Endothelial cell of umbilical vein (primary cell): ENCODE measurements at regions of chr3 and their contacts with region 1.

Region 1: DNA sequence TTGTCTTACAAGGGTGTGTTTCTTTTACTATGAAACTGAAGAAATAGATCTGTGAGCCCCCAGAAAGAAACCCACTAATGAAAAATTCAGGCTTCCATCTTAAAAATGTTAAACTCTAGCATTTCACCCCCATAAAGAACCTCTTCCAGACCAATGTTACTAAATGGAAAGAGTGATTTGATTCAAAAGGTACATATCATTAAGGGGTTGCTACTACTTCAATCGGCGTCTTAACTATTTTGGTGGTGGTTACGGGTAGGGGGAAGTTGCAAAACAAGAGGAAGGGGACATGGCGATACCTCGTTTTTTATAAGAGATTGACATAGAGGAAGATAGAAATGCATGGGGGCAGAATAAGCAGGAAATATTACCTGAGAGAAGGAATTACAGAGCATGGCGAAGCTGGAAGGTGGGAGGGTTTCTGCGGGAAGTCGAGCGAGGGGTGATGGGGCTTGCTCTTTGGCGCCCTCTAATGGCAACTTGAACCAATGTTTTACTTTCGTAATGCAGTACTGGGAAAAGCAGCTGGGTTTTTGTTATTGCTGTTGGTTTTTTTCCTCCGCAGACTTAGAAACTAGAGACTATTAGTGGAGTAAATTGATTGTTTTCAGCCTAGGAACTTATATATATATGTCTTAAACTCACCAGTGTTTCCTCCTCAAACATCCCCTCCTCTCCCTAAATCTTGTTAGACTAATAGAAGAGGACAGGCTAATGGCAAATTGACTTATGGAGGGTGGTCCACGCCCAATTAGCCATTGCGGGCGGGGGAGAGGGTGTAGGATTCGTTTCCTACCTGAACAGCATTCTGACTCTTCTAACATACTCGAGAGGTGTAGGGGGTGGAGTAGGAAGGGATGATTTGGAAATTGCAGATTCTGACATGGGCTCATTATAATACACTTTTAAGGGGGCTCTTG is 11.3 kb upstream of the SOX2 start:
- DNase-seq: peak; percentile 89
- H3K4me3 ChIP-seq: peak overlapping the region; percentile 38 to 75 (median 43)
- H3K27ac ChIP-seq: no peak overlapping the region
- H3K4me1 ChIP-seq: peaks cover 28% of the 10 kb centered on the region
- H3K27me3 ChIP-seq: peaks cover 0 to 2% of the 10 kb centered on the region in 2 experiments
- CTCF ChIP-seq: peak; percentile 84 to 90
- POLR2A ChIP-seq: no peak

Region 2: DNA sequence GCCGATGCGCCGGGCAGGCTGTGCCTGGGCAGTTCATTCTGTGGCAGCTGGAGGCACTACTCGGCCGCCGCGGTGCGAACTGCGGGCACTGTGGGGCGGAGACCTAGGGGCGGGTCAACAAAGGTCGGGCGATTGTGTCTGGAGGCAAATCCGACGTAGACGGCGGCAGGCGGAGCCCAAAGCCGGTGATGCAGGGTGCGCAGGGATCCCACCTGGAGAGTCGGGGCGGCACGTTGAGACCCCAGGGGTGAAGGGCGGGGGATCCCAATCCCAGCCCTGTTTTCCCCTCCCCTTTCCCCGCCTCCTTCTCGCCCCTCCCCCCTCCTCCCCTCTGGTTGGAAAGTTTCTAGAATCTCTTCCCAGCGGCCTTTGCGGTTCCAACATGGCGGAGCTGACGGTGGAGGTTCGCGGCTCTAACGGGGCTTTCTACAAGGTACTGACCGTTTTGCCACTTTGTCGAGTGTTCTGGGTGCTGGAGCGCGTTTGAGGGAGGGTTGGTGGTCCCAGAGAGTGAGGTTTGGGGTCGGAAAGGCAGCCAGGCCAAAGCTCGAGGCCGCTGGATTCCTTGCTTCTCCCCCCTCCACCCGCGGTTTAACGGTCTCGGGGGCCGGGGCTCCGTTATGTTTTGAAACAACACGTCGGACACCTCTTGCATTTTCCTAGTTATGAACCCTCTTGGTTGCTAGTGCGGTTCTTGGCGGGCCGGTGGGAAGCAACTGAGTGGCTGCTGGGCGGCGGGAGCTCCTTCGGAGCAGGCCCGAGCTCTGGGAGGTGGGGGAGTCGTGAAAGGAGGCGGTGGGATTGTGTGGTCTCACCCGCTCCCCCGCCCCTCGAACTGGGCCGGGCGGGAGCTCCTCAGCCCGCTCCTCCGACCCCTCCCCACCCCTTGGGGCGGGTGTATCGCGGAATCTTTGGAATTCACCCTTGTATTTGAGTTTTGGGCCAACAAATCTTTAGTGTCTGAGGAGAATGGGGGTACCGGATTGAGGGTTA is 787.8 kb before region 1 on chr3 and contains the start of gene FXR1:
- CTCF ChIA-PET with region 1: interaction called, 3 read pairs
- POLR2A ChIA-PET with region 1: no interaction called
- dilution Hi-C with region 1: no loop called
- intact Hi-C with region 1: loop called (anchors 5 kb)
- DNase-seq: peak; percentile 83
- H3K4me3 ChIP-seq: peak within 1 kb of the TSS; percentile 81 to 98 (median 90)
- H3K27ac ChIP-seq: peak within 1 kb of the TSS; percentile 92
- H3K4me1 ChIP-seq: peaks cover 16% of the 10 kb centered on the region
- H3K27me3 ChIP-seq: no peaks in the 10 kb centered on the region
- CTCF ChIP-seq: peak; percentile 67 to 83
- POLR2A ChIP-seq: peak; percentile 87
- total RNA-seq, gene FXR1: 183 and 186 TPM in 2 replicates

Region 3: GRCh38 chr3:181326637-181327223 is 373.7 kb before region 1 on chr3:
- CTCF ChIA-PET with region 1: interaction called, 312 read pairs
- POLR2A ChIA-PET with region 1: no interaction called
- dilution Hi-C with region 1: no loop called
- intact Hi-C with region 1: loop called (anchors 1 kb)
- DNase-seq: peak; percentile 54
- H3K4me3 ChIP-seq: no peak overlapping the region
- H3K27ac ChIP-seq: no peak overlapping the region
- H3K4me1 ChIP-seq: no peaks in the 10 kb centered on the region
- H3K27me3 ChIP-seq: no peaks in the 10 kb centered on the region
- CTCF ChIP-seq: peak; percentile 54 to 58
- POLR2A ChIP-seq: no peak

Region 4: GRCh38 chr3:181567311-181568075 is 132.9 kb before region 1 on chr3:
- CTCF ChIA-PET with region 1: interaction called, 483 read pairs
- POLR2A ChIA-PET with region 1: no interaction called
- dilution Hi-C with region 1: no loop called
- intact Hi-C with region 1: loop called (anchors 1 kb)
- DNase-seq: no peak
- H3K4me3 ChIP-seq: no peak overlapping the region
- H3K27ac ChIP-seq: no peak overlapping the region
- H3K4me1 ChIP-seq: peaks cover 3% of the 10 kb centered on the region
- H3K27me3 ChIP-seq: no peaks in the 10 kb centered on the region
- CTCF ChIP-seq: no peak
- POLR2A ChIP-seq: no peak

Region 5: GRCh38 chr3:181623924-181624694 is 76.3 kb before region 1 on chr3:
- CTCF ChIA-PET with region 1: interaction called, 80 read pairs
- POLR2A ChIA-PET with region 1: interaction called, 3 read pairs
- dilution Hi-C with region 1: no loop called
- intact Hi-C with region 1: loop called (anchors 1 kb)
- DNase-seq: peak; percentile 81
- H3K4me3 ChIP-seq: peak overlapping the region in 1 of 3 experiments; percentile 26
- H3K27ac ChIP-seq: peak overlapping the region; percentile 88
- H3K4me1 ChIP-seq: peaks cover 42% of the 10 kb centered on the region
- H3K27me3 ChIP-seq: no peaks in the 10 kb centered on the region
- CTCF ChIP-seq: no peak
- POLR2A ChIP-seq: no peak

Region 6: DNA sequence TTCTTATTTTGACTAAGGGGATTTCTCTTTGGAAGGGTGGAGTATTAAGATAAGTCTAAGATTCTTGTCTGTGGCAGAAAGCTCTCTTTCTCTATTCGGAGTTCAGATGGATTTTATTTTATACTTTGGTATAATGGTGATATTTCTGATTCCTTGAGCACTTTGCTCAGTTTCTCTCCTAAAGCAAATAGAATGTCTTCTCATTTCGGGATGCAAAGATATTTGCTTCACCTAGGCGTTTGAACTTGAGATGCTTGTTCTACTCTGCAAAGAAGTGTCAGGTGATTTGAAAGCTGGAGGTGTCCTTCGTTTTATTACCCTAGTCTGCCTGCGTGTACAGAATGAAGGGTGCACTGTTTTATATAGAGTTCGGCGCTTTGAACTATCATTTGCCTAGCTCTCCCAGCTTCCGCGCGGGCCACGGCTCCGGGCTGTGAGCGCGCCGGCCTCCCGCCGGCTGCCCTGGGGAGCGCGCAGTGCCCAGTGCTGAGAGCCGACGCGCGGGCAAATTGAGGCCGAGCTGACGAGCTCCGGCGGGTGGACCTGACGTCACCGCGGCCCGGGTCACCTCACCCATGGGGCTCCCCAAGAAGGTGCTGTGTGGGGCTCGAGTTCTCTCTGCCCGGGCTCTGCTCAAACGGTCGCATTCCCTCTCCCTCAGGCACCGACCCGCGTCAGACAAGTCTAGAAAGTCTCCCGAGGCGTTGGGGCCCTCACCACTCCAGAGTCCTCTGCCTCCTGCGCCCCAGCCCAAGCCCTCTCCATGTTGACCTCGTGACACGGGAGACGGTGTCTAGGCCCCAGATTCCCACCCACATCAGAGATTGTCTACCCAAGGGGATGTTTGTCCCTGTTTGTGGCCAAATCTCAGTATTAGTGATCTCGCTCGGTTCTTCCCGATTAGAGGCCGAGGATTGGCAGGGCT is 18.8 kb after region 1 on chr3:
- CTCF ChIA-PET with region 1: interaction called, 10 read pairs
- POLR2A ChIA-PET with region 1: no interaction called
- dilution Hi-C with region 1: no loop called
- intact Hi-C with region 1: no loop called
- DNase-seq: no peak
- H3K4me3 ChIP-seq: no peak overlapping the region
- H3K27ac ChIP-seq: no peak overlapping the region
- H3K4me1 ChIP-seq: no peaks in the 10 kb centered on the region
- H3K27me3 ChIP-seq: peaks cover 6 to 7% of the 10 kb centered on the region in 2 experiments
- CTCF ChIP-seq: no peak
- POLR2A ChIP-seq: no peak